HEK293 (cell line): ENCODE measurements at regions of chr4 and their contacts with region 1.

Region 1: GRCh38 chr4:124111922-124112321 is 600.6 kb downstream of the ANKRD50 start:
- H3K4me3 ChIP-seq: no peak overlapping the region
- H3K27ac ChIP-seq: no peak overlapping the region
- H3K4me1 ChIP-seq: no peaks in the 10 kb centered on the region
- CTCF ChIP-seq: 0 out of 2 replicates have a peak, but pooled peaks have one; percentile 30

Region 2: GRCh38 chr4:123776254-123776653 is 335.7 kb before region 1 on chr4:
- CTCF ChIA-PET with region 1: interaction called, 10 read pairs
- POLR2A ChIA-PET with region 1: no interaction called
- H3K4me3 ChIP-seq: no peak overlapping the region
- H3K27ac ChIP-seq: no peak overlapping the region
- H3K4me1 ChIP-seq: no peaks in the 10 kb centered on the region
- CTCF ChIP-seq: no peak

Region 3: GRCh38 chr4:124183926-124184325 is 72.0 kb after region 1 on chr4:
- CTCF ChIA-PET with region 1: no interaction called
- POLR2A ChIA-PET with region 1: no interaction called
- H3K4me3 ChIP-seq: no peak overlapping the region
- H3K27ac ChIP-seq: no peak overlapping the region
- H3K4me1 ChIP-seq: no peaks in the 10 kb centered on the region
- CTCF ChIP-seq: no peak